ENCODE measurements at regions of chr19 and their contacts with region 1.

Region 1: DNA sequence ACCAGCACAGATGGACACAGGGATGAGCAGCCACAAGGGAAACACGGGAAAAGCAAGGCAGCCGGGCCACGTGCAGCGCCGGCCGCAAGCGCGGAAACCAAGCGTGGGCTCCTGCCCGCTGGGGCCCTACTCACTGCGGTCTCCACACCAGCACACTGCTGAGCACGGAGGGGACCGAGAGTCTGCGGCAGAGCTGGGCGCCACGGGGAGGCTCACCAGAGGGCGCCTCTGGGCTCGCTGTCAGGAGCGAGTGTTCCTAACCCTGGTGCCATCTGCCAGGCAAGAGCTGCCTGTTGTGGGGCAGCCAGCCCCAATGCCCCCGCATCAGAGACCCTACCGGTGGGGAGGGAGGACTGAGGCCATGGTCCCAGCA is 26.5 kb downstream of the MPND start:
- DNase-seq: peak; percentile 88
- H3K4me3 Mint-ChIP-seq: peak overlapping the region; percentile 65
- H3K27ac Mint-ChIP-seq: peak overlapping the region; percentile 95
- H3K4me1 Mint-ChIP-seq: peaks cover 46% of the 10 kb centered on the region
- H3K27me3 Mint-ChIP-seq: no peaks in the 10 kb centered on the region

Region 2: DNA sequence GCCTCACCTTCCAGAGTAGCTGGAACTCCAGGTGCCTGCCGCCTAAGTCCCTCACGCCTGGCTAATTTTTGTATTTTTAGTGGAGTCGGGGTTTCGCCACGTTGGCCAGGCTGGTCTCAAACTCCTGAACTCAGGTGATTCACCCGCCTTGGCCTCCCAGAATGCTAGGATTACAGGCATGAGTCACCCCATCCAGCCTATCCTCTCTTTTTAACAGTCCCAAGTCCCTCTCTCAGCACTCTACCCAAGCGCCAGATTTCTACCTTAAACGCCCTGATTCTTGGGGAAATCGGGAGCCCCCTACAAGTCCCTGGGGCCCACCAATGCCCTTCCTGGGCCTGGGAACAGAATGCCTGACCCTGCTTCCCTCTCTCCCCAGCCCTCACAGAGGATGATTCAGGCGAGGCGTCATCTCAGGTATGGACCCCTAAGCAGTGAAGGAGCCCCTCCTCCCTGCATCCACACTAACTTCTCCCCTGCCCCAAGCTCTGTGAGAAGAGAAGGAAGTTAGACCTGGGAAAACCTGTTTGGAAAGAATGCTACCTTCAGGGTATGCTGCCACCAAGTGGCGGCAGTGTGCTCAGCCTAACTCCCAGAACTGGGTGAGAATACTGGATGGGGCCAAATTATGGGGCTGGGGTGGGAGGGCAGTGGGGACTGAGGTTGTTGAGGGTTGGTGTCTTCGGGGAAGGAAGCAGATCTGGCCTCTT is 161.3 kb before region 1 on chr19:
- CTCF ChIA-PET with region 1: no interaction called
- POLR2A ChIA-PET with region 1: no interaction called
- intact Hi-C with region 1: no loop called
- DNase-seq: no peak
- H3K4me3 Mint-ChIP-seq: no peak overlapping the region
- H3K27ac Mint-ChIP-seq: no peak overlapping the region
- H3K4me1 Mint-ChIP-seq: no peaks in the 10 kb centered on the region
- H3K27me3 Mint-ChIP-seq: no peaks in the 10 kb centered on the region

Region 3: GRCh38 chr19:4393947-4394590 is 24.2 kb after region 1 on chr19:
- CTCF ChIA-PET with region 1: interaction called, 24 read pairs
- POLR2A ChIA-PET with region 1: interaction called, 4 read pairs
- intact Hi-C with region 1: no loop called
- DNase-seq: no peak
- H3K4me3 Mint-ChIP-seq: no peak overlapping the region
- H3K27ac Mint-ChIP-seq: peak overlapping the region; percentile 15
- H3K4me1 Mint-ChIP-seq: peaks cover 67% of the 10 kb centered on the region
- H3K27me3 Mint-ChIP-seq: no peaks in the 10 kb centered on the region